ENCODE measurements at regions of chr18 and their contacts with region 1.

Region 1: DNA sequence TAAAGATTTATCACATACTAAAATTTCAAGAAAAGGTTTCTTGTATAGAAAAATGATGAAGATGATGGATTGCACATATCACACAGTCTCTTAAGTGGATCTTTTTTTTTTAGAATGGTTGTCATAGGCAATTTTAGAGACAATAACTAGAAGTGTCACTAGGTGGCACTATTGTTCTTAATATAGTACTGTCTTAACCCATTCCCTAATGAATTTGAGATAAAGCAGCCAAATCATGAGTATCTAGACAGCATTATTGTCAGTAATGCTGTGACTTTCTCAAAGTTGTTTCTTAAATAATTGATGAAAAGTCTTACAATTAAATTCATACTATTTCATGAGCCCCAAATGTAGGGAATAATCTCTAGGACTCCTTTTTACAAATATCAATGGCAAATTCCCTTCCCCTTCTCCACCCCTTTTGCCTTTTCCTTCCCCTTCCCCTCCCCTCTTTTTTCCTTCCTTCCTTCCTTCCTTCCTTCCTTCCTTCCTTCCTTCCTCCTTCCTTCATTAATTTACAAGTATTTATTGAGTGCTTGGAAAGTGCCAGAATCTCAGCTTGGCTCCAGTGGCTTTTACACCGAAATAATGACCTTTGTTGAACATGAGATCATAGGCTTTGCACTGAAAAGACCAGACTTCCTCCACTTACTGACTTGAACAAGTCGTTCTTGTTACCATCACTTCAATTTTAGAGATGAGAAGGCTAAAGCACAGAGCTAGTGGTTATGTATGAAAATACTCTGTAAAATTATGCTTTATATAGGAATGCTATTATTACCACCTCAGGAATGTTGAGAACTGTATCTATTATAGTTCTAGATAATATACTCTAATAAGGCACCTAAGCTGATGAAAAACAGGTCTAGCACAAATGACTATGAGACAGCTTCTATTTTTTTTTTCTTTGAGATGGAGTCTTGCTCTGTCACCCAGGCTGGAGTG is 19.8 kb downstream of the MYL12B start:
- DNase-seq: peak; percentile 78
- ATAC-seq: peak; percentile 71
- H3K4me3 ChIP-seq: no peak overlapping the region
- H3K27ac ChIP-seq: peak overlapping the region; percentile 11; the same call in 1 of the 2 replicates
- H3K4me1 ChIP-seq: peaks cover 15 to 40% of the 10 kb centered on the region in 2 experiments
- H3K27me3 ChIP-seq: no peaks in the 10 kb centered on the region
- CTCF ChIP-seq: peak; percentile 45 to 75 (median 74)
- POLR2A ChIP-seq: no peak
- RAD21 ChIP-seq: peak; percentile 93

Region 2: GRCh38 chr18:2787225-2787624 is 494.5 kb before region 1 on chr18:
- CTCF ChIA-PET with region 1: no interaction called
- POLR2A ChIA-PET with region 1: no interaction called
- RAD21 ChIA-PET with region 1: no interaction called
- intact Hi-C with region 1: no loop called
- DNase-seq: no peak
- ATAC-seq: no peak
- H3K4me3 ChIP-seq: no peak overlapping the region
- H3K27ac ChIP-seq: no peak overlapping the region
- H3K4me1 ChIP-seq: no peaks in the 10 kb centered on the region
- H3K27me3 ChIP-seq: no peaks in the 10 kb centered on the region
- CTCF ChIP-seq: no peak
- POLR2A ChIP-seq: no peak
- RAD21 ChIP-seq: no peak

Region 3: DNA sequence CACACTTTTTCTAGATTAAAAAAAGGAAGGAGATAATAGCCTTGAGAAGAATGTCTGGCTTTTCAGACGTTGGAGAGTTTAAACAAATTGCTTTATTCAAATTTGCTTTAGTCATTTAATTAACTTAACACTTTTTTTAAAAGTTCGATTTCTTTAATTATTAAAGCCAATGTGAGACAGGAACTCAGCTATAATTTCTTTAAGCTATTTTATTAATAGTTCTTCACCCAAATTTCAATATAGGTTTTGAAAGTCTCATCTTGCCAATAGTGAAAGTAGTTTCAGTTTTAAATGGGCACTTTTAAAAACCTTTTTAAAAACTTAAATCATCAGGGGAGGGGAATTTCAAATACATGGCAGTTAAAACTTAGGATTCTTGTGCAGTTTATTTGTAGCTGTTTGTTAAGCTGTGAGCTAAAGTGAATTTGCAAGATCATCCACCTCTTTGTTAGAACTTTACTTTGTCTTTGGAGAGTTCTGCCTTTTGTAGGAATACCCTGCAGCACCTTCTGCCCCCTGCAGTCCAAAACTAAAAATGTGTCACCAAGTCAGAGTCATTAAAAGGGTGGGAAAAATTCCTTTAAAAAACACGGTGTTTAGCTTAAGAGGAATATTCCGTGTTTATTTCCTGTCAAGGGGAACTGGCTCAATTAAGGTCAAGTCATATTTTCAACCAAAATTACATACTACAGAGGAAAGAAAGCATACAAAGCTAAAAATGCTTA is 172.8 kb after region 1 on chr18:
- CTCF ChIA-PET with region 1: interaction called, 4 read pairs
- POLR2A ChIA-PET with region 1: no interaction called
- RAD21 ChIA-PET with region 1: no interaction called
- intact Hi-C with region 1: loop called (anchors 2 kb)
- DNase-seq: no peak
- ATAC-seq: no peak
- H3K4me3 ChIP-seq: peak overlapping the region; percentile 78 to 85
- H3K27ac ChIP-seq: peak overlapping the region; percentile 90; the same call in 1 of the 2 replicates
- H3K4me1 ChIP-seq: peaks cover 36 to 72% of the 10 kb centered on the region in 2 experiments
- H3K27me3 ChIP-seq: no peaks in the 10 kb centered on the region
- CTCF ChIP-seq: peak in 2 of 3 experiments; percentile 63 to 68; a peak in 4 of 6 replicates
- POLR2A ChIP-seq: no peak
- RAD21 ChIP-seq: no peak

Region 4: DNA sequence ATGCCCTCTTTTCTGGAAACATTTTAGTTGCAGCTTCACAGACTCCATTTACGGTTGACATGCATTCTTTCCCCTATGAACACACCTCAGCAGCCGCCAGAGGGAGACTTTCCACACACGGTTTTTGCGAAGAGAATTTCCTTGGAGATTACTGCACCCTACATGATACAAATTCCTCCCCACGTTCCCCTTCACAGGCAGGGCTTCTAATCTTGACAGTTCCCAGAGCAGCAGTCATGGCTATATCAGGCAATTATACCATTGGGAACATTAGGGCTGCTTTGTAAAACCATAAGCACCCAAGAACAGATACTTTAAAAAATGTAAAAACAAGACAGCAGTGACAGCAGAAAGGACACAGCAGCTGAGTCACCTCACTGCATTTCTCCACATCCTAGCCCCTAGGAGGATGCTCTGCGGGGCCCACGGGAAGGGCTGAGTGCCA is 422.0 kb after region 1 on chr18:
- CTCF ChIA-PET with region 1: no interaction called
- POLR2A ChIA-PET with region 1: no interaction called
- RAD21 ChIA-PET with region 1: no interaction called
- intact Hi-C with region 1: loop called (anchors 5 kb)
- DNase-seq: peak; percentile 48
- ATAC-seq: peak; percentile 94
- H3K4me3 ChIP-seq: peak overlapping the region in 1 of 2 experiments; percentile 19; a peak in 3 of 4 replicates
- H3K27ac ChIP-seq: no peak overlapping the region
- H3K4me1 ChIP-seq: peaks cover 7 to 16% of the 10 kb centered on the region in 2 experiments
- H3K27me3 ChIP-seq: no peaks in the 10 kb centered on the region
- CTCF ChIP-seq: peak; percentile 74 to 82 (median 77)
- POLR2A ChIP-seq: no peak
- RAD21 ChIP-seq: peak; percentile 70

Region 5: DNA sequence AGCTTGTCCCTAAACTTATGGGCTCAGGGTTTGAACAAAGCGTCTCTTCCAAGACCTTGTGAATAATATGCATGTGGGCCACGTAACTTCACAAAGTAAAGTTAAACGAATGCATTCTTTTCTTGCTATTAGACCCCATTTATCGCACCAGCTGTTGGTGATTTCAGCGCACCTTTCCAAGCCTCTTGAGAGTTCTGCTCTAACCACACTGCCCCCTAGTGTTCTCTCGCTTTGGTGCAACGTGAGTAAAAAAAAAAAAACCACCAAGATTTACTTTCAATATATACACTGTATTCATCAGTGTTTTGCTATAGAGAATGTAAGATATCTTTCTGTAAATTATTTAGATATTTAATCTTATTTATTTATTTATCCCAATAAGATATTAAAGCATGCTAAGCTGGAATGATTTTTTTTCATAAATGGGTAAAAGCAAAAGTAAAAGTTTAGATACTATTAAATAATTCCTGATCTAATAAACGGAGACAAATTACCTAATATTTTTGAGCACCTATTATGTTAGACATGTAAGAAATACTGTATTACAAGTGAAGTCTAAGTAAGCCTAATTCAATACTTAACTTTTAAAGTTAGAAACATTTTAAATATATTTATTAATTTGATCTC is 713.9 kb after region 1 on chr18:
- CTCF ChIA-PET with region 1: no interaction called
- POLR2A ChIA-PET with region 1: no interaction called
- RAD21 ChIA-PET with region 1: no interaction called
- intact Hi-C with region 1: loop called (anchors 2 kb)
- DNase-seq: peak; percentile 73
- ATAC-seq: peak; percentile 49; the same call in 1 of the 2 replicates
- H3K4me3 ChIP-seq: no peak overlapping the region
- H3K27ac ChIP-seq: no peak overlapping the region
- H3K4me1 ChIP-seq: peaks cover 0 to 3% of the 10 kb centered on the region in 2 experiments; a peak in 1 of 4 replicates
- H3K27me3 ChIP-seq: no peaks in the 10 kb centered on the region
- CTCF ChIP-seq: peak; percentile 58 to 85 (median 83); a peak in 5 of 6 replicates
- POLR2A ChIP-seq: no peak
- RAD21 ChIP-seq: peak; percentile 51

Region 6: DNA sequence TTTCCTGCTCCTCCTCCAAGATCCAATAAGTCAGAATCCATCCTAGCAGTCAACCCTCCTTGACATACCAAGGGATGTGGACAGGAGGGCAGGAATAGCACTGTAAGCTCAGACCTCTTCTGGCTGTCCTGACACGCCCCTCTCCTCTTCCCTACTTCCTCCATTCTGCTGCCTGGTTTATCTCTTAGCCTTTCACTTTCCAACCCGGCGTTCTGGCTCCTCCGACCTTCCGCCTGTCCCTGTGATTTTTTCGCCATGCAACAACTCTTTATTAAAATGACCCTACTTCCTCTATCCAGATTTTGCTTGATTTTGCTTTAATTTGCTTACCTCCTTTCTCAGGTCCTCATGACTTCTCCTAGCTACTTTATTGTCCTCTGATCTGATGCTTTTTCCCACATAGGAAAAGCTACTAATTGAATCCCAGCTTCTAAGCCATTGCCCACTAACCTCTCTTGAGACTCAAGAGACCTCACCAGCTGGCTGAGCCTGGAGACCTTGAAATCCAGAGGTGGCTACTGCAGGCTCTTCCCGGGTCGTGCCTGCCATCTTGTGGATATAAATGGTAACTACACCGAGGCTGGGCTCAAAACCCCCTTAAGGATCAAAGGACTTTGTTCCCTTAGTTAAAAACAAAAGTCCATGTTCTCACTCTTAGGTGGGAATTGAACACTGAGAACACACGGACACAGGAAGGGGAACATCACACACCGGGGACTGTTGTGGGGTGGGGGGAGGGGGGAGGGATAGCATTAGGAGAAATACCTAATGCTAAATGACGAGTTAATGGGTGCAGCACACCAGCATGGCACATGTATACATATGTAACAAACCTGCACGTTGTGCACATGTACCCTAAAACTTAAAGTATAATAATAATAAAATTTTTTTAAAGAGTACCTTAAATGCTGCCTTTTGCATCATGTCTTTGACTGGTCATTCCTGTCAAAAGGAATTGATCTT is 1775.9 kb after region 1 on chr18:
- CTCF ChIA-PET with region 1: no interaction called
- POLR2A ChIA-PET with region 1: no interaction called
- RAD21 ChIA-PET with region 1: no interaction called
- intact Hi-C with region 1: loop called (anchors 10 kb)
- DNase-seq: peak; percentile 21
- ATAC-seq: peak; percentile 55
- H3K4me3 ChIP-seq: no peak overlapping the region
- H3K27ac ChIP-seq: no peak overlapping the region
- H3K4me1 ChIP-seq: no peaks in the 10 kb centered on the region
- H3K27me3 ChIP-seq: no peaks in the 10 kb centered on the region
- CTCF ChIP-seq: peak in 2 of 3 experiments; percentile 51 to 68; a peak in 4 of 6 replicates
- POLR2A ChIP-seq: no peak
- RAD21 ChIP-seq: peak; percentile 55

Measured in HCT116 (cell line).